K562 (cell line): ENCODE measurements at regions of chr4 and their contacts with region 1.

Region 1: DNA sequence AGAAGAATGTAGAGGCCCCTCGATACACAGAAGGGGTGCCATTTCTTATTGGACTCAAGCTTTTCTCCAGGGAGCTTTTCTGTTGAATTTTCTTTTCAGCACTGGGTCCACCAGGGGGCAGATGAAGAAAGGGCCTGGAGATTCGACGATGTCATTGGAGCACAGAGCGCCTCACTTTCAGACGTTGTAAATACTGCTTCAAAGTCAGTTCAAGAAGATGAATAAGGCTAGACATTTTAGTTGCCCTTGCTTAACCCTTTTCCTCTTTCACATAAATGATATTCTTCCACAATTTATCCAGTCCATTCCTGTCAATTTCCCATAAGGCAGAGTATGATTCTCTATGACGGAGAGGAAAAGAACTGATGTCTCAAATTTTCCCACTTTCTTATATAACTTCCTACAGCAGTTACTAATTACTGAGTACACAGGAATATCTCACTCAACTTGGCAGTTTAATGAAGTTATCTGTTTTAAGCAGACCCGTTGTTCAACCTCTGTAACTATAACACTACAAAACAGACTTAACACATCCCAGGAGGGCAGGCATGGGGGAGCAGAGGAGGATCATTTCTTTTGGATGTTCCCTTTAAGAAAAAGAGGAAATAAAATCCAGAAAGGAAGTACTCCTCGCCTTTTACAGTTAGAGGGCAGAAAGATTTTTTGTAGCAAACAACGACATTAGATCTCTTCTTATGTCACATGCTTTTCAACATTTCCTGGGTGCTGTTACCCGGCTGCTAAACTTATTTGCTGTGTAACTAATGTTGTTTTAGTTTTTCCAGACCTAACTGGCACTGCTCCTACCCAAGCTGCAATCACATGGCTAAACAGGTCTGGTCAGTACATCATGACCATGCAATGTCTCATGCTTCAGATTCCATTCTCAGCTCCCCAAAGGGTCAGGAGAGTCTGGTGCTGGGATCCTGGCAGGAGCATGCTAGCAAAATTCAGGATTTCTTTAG is 12.2 kb upstream of the CENPU start:
- DNase-seq: peak; percentile 68 to 83 (median 74)
- ATAC-seq: peak; percentile 86
- H3K4me3 ChIP-seq: no peak overlapping the region
- H3K27ac ChIP-seq: peak overlapping the region; percentile 6; the same call in 1 of the 3 replicates
- H3K4me1 ChIP-seq: peaks cover 18 to 20% of the 10 kb centered on the region in 2 experiments
- H3K27me3 ChIP-seq: no peaks in the 10 kb centered on the region
- CTCF ChIP-seq: peak; percentile 77 to 82 (median 78)
- EP300 ChIP-seq: no peak; the same call in 1 of the 2 replicates
- POLR2A ChIP-seq: no peak
- RAD21 ChIP-seq: peak; percentile 87 to 88

Region 2: GRCh38 chr4:184907216-184907615 is 161.1 kb after region 1 on chr4:
- CTCF ChIA-PET with region 1: interaction called, 6 read pairs
- POLR2A ChIA-PET with region 1: no interaction called
- in situ Hi-C with region 1: no loop called
- intact Hi-C with region 1: loop called (anchors 1 kb)
- DNase-seq: peak in 2 of 4 experiments; percentile 11 to 22
- ATAC-seq: peak; percentile 71
- H3K4me3 ChIP-seq: no peak overlapping the region
- H3K27ac ChIP-seq: no peak overlapping the region
- H3K4me1 ChIP-seq: no peaks in the 10 kb centered on the region
- H3K27me3 ChIP-seq: peaks cover 3 to 17% of the 10 kb centered on the region in 2 experiments
- CTCF ChIP-seq: peak; percentile 13 to 56 (median 28); a peak in 3 of 6 replicates
- EP300 ChIP-seq: no peak
- POLR2A ChIP-seq: no peak
- RAD21 ChIP-seq: peak; percentile 51 to 81

Region 3: DNA sequence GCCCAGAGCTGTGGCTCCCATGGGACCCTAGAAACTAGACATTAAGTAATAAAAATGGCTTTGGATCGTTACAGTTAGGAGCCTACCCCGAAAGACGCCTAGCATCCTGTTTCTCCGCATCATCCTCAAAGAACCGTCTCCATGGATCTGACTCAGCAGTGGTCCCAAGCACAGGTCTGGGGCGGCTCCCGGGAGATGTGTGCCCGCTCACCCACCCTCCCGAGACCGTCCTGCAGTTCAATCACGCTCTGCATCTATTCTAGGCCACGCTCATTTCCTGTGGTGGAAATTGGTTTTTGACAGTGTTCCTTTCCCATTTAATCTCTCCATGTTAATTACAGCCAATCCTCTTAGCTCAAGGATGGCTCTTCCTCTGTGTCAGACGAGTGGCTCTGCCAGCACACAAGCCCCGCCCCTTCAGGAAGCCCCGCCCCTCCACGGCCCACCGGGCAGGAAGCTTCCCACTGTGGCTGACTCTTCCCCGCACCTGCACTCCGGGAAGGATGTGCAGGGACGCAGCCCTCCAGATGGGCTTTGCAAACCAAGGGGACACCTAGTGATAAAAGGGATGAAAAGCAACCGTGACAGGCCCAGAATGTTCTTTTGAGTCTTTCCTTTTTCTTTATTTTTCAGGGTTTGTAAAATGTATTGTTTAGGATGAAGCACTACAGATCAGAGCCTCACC is 237.7 kb after region 1 on chr4:
- CTCF ChIA-PET with region 1: interaction called, 3 read pairs
- POLR2A ChIA-PET with region 1: no interaction called
- in situ Hi-C with region 1: loop called (anchors 10 kb)
- intact Hi-C with region 1: loop called (anchors 5 kb)
- DNase-seq: peak; percentile 37 to 70 (median 55)
- ATAC-seq: peak; percentile 85
- H3K4me3 ChIP-seq: no peak overlapping the region
- H3K27ac ChIP-seq: no peak overlapping the region
- H3K4me1 ChIP-seq: peaks cover 0 to 8% of the 10 kb centered on the region in 2 experiments; a peak in 1 of 5 replicates
- H3K27me3 ChIP-seq: peaks cover 13 to 50% of the 10 kb centered on the region in 2 experiments
- CTCF ChIP-seq: peak; percentile 34 to 54 (median 43); a peak in 5 of 6 replicates
- EP300 ChIP-seq: no peak
- POLR2A ChIP-seq: no peak
- RAD21 ChIP-seq: peak; percentile 61 to 67

Region 4: GRCh38 chr4:185096032-185096653 is 350.0 kb after region 1 on chr4:
- CTCF ChIA-PET with region 1: no interaction called
- POLR2A ChIA-PET with region 1: no interaction called
- in situ Hi-C with region 1: no loop called
- intact Hi-C with region 1: loop called (anchors 5 kb)
- DNase-seq: peak in 3 of 4 experiments; percentile 21 to 59 (median 24)
- ATAC-seq: no peak
- H3K4me3 ChIP-seq: no peak overlapping the region
- H3K27ac ChIP-seq: no peak overlapping the region
- H3K4me1 ChIP-seq: peaks cover 0 to 3% of the 10 kb centered on the region in 2 experiments; a peak in 2 of 5 replicates
- H3K27me3 ChIP-seq: peaks cover 15 to 22% of the 10 kb centered on the region in 2 experiments
- CTCF ChIP-seq: peak; percentile 36 to 76 (median 48); a peak in 4 of 6 replicates
- EP300 ChIP-seq: no peak
- POLR2A ChIP-seq: no peak
- RAD21 ChIP-seq: peak; percentile 70 to 74